GM12878 (cell line): ENCODE measurements at regions of chr17 and their contacts with region 1.

Region 1: DNA sequence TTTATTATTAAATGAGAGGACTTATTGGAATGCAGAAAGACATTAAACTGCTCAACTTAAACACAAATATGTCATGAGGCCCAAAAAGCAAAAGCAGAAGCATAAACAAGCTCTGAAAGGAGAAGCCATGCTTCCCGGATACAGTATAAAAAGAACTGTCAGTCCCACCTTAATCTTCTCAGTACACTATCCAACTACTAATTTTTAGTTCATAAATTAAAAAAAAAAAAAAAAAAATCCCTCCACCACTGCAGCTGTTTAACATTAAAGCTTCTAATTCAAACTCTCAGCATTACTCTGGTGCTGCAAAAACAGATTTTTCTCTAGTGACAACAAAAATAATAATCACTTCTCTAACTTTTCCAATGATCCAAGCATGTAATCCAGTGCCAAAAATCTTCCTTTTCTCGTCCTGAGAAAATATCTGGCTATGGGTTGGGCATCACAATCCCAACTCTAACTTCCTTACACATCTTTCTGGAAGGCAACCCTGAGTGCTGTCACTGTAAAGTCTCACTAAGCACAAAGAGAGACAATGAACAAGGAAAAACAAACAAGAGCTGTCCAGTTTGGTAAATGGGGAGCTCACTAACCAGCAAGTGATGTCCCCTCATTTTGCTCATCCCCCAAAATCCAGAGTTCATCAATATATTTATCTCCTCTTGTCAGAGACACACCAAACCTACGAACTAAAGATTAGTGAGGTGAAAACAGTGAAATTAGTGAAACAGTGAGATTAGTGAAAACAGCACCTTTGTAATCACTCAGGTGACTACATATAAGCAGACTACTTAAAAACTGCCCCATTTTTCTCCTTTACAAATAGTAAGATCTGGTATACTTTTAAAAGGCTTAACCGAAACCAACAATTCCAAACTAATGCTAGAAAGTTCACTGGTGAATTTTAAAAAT is 5.5 kb downstream of the USP32 start:
- DNase-seq: no peak
- ATAC-seq: no peak; the same call in 2 of the 3 replicates
- H3K4me3 ChIP-seq: peak overlapping the region; percentile 40; the same call in 1 of the 2 replicates
- H3K27ac ChIP-seq: no peak overlapping the region; the same call in 1 of the 2 replicates
- H3K4me1 ChIP-seq: peaks cover 3% of the 10 kb centered on the region; the same call in 1 of the 2 replicates
- H3K27me3 ChIP-seq: no peaks in the 10 kb centered on the region
- CTCF ChIP-seq: no peak
- EP300 ChIP-seq: no peak
- POLR2A ChIP-seq: no peak
- RAD21 ChIP-seq: no peak

Region 2: GRCh38 chr17:60355663-60356594 is 30.5 kb before region 1 on chr17:
- CTCF ChIA-PET with region 1: interaction called, 4 read pairs
- POLR2A ChIA-PET with region 1: interaction called, 11 read pairs
- RAD21 ChIA-PET with region 1: interaction called, 7 read pairs
- SMC1A ChIA-PET with region 1: interaction called, 8 read pairs
- in situ Hi-C with region 1: no loop called
- intact Hi-C with region 1: no loop called
- DNase-seq: no peak
- ATAC-seq: peak; percentile 53
- H3K4me3 ChIP-seq: no peak overlapping the region
- H3K27ac ChIP-seq: peak overlapping the region; percentile 62
- H3K4me1 ChIP-seq: peaks cover 18% of the 10 kb centered on the region; the same call in 1 of the 2 replicates
- H3K27me3 ChIP-seq: no peaks in the 10 kb centered on the region
- CTCF ChIP-seq: no peak
- EP300 ChIP-seq: no peak
- POLR2A ChIP-seq: no peak
- RAD21 ChIP-seq: no peak

Region 3: DNA sequence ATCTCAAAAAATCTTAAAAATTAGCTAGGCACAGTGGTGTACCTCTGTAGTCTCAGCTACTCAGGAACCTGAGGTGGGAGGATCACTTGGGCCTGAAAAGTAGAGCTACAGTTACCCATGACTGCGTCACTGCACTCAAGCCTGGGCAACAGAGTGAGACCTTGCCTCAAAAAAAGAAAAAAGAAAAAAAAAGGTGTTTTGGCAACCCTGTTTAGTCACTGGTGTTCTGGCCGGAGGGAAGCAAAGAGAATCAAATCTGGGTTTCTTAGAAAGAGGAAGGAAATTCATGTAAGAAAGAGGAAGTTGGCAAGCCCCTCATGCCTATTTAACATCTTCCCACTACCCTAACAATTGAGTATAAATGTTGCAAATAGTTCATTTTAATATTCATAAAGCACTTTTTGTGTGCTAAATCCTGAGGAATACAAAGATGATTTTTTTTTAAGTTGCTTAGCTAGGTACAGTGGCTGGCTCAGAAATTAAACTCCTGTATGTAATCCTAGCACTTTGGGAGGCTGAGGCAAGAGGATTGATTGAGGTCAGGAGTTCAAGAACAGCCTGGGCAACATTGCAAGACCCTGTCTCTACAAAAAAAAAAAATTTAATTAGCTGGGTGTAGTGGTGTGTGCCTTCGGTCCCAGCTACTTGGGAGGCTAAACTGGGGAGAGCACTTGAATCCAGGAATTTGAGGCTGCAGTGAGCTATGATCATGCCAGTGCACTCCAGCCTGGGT is 12.0 kb after region 1 on chr17:
- CTCF ChIA-PET with region 1: interaction called, 5 read pairs
- POLR2A ChIA-PET with region 1: interaction called, 10 read pairs
- RAD21 ChIA-PET with region 1: interaction called, 23 read pairs
- SMC1A ChIA-PET with region 1: interaction called, 32 read pairs
- in situ Hi-C with region 1: no loop called
- intact Hi-C with region 1: no loop called
- DNase-seq: peak; percentile 71
- ATAC-seq: peak; percentile 87
- H3K4me3 ChIP-seq: no peak overlapping the region
- H3K27ac ChIP-seq: peak overlapping the region; percentile 49
- H3K4me1 ChIP-seq: peaks cover 7% of the 10 kb centered on the region
- H3K27me3 ChIP-seq: no peaks in the 10 kb centered on the region
- CTCF ChIP-seq: no peak
- EP300 ChIP-seq: 0 out of 4 replicates have a peak, but pooled peaks of 1 of the 2 experiments have one; percentile 19
- POLR2A ChIP-seq: no peak
- RAD21 ChIP-seq: no peak

Region 4: DNA sequence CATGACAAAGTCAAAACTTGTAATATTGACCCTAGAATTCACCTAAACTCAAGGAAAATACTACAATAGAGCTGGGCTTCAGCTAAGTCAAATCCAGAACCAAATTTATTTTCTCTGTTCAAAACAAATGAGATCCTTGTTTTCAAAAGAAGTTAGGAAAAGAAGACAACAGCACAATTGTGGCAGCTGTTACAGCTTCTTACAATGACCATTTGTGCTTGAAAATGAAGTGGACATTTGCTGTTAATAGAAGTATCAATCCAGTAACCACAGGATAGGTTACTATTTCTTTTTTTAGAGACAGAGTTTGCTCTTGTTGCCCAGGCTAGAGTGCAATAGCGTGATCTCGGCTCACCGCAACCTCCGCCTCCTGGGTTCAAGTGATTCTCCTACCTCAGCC is 95.2 kb after region 1 on chr17:
- CTCF ChIA-PET with region 1: no interaction called
- POLR2A ChIA-PET with region 1: no interaction called
- RAD21 ChIA-PET with region 1: no interaction called
- SMC1A ChIA-PET with region 1: no interaction called
- in situ Hi-C with region 1: no loop called
- intact Hi-C with region 1: no loop called
- DNase-seq: no peak
- ATAC-seq: no peak
- H3K4me3 ChIP-seq: no peak overlapping the region
- H3K27ac ChIP-seq: no peak overlapping the region
- H3K4me1 ChIP-seq: no peaks in the 10 kb centered on the region
- H3K27me3 ChIP-seq: no peaks in the 10 kb centered on the region
- CTCF ChIP-seq: no peak
- EP300 ChIP-seq: no peak
- POLR2A ChIP-seq: no peak
- RAD21 ChIP-seq: no peak